PC-3 (cell line): ENCODE measurements at regions of chr11 and their contacts with region 1.

Region 1: GRCh38 chr11:64688534-64688982 is 34.4 kb downstream of the NRXN2 start:
- DNase-seq: peak; percentile 92
- ATAC-seq: peak; percentile 97
- H3K4me3 ChIP-seq: peak overlapping the region; percentile 61
- H3K27ac ChIP-seq: no peak overlapping the region
- H3K4me1 ChIP-seq: no peaks in the 10 kb centered on the region
- H3K27me3 ChIP-seq: peaks cover 16% of the 10 kb centered on the region
- CTCF ChIP-seq: peak; percentile 94

Region 2: DNA sequence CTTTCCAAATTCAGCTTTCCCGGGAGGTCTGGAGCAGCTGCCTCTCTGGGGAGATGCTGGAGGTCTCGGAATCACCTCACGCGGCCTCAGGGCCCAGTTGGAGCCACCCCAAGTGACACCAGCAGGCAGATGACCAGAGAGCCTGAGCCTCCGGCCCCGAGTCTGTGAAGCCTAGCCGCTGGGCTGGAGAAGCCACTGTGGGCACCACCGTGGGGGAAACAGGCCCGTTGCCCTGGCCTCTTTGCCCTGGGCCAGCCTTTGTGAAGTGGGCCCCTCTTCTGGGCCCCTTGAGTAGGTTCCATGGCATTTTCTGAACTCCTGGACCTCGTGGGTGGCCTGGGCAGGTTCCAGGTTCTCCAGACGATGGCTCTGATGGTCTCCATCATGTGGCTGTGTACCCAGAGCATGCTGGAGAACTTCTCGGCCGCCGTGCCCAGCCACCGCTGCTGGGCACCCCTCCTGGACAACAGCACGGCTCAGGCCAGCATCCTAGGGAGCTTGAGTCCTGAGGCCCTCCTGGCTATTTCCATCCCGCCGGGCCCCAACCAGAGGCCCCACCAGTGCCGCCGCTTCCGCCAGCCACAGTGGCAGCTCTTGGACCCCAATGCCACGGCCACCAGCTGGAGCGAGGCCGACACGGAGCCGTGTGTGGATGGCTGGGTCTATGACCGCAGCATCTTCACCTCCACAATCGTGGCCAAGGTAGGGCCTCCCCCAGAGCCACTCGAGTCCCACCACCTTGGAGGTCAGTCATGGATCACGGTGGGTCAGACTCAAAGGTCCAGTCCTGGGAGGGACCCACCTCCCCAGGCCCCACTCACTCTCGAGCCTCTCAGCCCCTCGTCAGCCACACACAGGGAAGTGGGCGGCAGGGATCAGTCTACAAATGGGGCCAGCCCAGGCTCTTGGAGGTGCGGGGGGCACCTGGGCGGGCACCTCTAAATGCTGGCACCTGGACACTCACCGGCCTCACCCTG is 97.0 kb before region 1 on chr11:
- CTCF ChIA-PET with region 1: no interaction called
- POLR2A ChIA-PET with region 1: no interaction called
- intact Hi-C with region 1: no loop called
- DNase-seq: no peak
- ATAC-seq: no peak
- H3K4me3 ChIP-seq: no peak overlapping the region
- H3K27ac ChIP-seq: no peak overlapping the region
- H3K4me1 ChIP-seq: no peaks in the 10 kb centered on the region
- H3K27me3 ChIP-seq: peaks cover 1% of the 10 kb centered on the region; the same call in 1 of the 2 replicates
- CTCF ChIP-seq: no peak

Region 3: GRCh38 chr11:64723117-64723906 is 34.8 kb after region 1 on chr11 and contains the start of gene NRXN2:
- CTCF ChIA-PET with region 1: interaction called, 4 read pairs
- POLR2A ChIA-PET with region 1: no interaction called
- intact Hi-C with region 1: loop called (anchors 1 kb)
- DNase-seq: peak; percentile 91
- ATAC-seq: peak; percentile 100
- H3K4me3 ChIP-seq: peak within 1 kb of the TSS; percentile 70
- H3K27ac ChIP-seq: no peak within 1 kb of the TSS
- H3K4me1 ChIP-seq: peaks cover 3% of the 10 kb centered on the region; the same call in 1 of the 2 replicates
- H3K27me3 ChIP-seq: peaks cover 34% of the 10 kb centered on the region
- CTCF ChIP-seq: peak; percentile 99
- total RNA-seq, gene NRXN2: not detected in 2 replicates

Region 4: DNA sequence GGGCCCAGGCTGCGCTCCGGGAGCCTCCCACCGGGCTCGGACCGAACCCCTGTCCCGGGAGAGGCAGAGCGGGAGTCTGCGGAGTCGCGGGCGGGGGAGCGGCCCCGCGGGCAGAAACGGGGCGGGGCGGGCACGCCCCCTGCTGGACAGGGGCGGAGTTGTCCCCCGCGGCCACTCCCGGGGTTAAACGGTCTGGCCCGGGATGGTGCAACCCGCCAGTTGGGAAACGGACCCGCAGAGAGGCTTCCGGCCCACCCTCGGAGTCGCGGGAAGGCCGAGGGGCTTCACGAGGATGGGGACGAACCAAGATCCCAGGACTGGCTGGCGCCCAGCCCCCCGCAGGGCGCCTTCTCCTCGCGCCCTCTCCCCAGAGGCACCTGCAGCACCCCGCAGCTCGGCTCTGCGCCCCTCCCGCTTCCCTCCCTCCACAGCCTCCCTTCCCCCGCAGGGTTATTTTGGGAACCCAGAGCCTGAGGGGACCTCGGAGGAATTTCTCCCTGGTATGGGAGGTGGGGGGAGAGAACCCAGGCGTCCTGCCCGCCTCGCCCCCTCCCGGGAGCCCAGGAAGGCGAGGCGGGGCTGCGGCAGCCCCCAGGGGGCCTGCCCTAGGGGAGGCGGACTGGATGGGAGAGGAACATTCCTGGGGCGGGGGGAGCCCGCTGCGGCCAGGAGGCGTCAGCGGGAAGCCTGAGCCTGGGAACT is 54.5 kb after region 1 on chr11:
- CTCF ChIA-PET with region 1: no interaction called
- POLR2A ChIA-PET with region 1: no interaction called
- intact Hi-C with region 1: loop called (anchors 1 kb)
- DNase-seq: peak; percentile 73
- ATAC-seq: peak; percentile 70
- H3K4me3 ChIP-seq: peak overlapping the region; percentile 70
- H3K27ac ChIP-seq: no peak overlapping the region
- H3K4me1 ChIP-seq: peaks cover 13% of the 10 kb centered on the region
- H3K27me3 ChIP-seq: peaks cover 36% of the 10 kb centered on the region
- CTCF ChIP-seq: peak; percentile 87